H1 (cell line): ENCODE measurements at regions of chr3 and their contacts with region 1.

Region 1: DNA sequence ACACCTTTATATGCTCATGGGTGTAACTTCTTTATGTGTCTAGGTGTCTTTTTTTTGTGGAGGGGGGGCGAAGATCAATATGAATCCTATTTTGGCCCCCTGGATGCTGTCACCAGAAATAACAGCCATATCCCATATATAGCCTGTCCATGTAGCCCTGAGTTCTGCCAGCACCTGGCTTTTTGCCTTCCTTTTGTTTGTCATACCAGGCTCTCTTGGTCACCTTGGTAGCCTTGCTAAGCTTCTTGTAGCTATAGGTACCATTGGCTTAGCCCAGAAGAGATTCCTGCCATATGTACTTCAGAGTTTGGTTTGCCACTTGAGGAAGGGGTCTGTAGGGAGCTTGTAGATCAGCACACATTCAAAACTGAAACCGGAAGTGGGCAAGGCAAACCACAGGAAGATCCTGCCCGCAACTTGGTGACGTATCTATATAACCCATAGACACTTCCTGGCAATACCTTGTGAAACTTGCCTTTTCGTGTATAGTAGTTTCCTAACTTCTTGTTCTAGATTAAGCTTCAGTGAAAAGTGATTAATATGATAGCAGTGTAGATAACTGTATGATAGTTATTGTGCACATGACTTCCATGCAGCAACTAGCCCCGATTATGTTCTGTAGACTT is 11.9 kb downstream of the RASA2 start:
- DNase-seq: no peak
- H3K4me3 ChIP-seq: no peak overlapping the region
- H3K27ac ChIP-seq: no peak overlapping the region
- H3K4me1 ChIP-seq: no peaks in the 10 kb centered on the region
- H3K27me3 ChIP-seq: no peaks in the 10 kb centered on the region
- CTCF ChIP-seq: no peak
- EP300 ChIP-seq: no peak
- POLR2A ChIP-seq: no peak
- RAD21 ChIP-seq: no peak

Region 2: DNA sequence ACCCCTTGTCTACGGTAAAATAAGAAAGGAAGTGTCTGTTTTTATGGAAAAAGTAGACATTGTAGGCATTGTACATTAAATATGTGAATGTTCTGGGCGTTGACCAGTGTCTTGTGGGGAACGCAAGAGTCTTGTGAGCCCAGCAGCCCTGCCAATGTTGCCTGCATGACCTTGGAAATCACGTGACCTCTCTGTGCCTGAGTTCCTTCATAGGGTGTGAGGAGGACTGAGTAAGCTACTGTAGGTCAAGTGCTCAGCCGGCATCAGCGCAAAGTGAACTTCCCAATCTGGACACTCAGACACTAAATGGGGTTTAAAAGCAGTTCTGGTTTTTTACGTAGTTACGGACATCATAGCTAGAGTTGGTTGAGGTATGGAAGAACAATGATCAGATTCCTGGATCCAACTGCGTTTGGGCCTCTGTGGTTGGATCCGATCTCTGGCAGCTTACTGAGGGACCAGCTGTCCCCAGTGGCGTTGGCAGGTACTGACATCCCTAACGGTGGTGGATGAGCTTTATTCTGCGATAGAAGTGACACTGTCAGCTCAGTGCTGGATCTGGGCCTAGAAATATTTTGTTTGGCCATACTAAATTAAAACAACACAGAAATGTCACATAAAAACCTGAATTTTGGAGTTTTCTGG is 383.8 kb before region 1 on chr3:
- CTCF ChIA-PET with region 1: no interaction called
- POLR2A ChIA-PET with region 1: no interaction called
- DNase-seq: peak in 1 of 2 experiments; percentile 65
- H3K4me3 ChIP-seq: no peak overlapping the region
- H3K27ac ChIP-seq: no peak overlapping the region
- H3K4me1 ChIP-seq: no peaks in the 10 kb centered on the region
- H3K27me3 ChIP-seq: no peaks in the 10 kb centered on the region
- CTCF ChIP-seq: peak; percentile 65 to 81 (median 80)
- EP300 ChIP-seq: no peak
- POLR2A ChIP-seq: no peak
- RAD21 ChIP-seq: peak; percentile 55 to 70

Region 3: GRCh38 chr3:141487521-141488252 is 11.0 kb before region 1 on chr3:
- CTCF ChIA-PET with region 1: interaction called, 4 read pairs
- POLR2A ChIA-PET with region 1: interaction called, 14 read pairs
- DNase-seq: peak; percentile 23 to 82
- H3K4me3 ChIP-seq: peak overlapping the region; percentile 63 to 74 (median 73)
- H3K27ac ChIP-seq: peak overlapping the region; percentile 88
- H3K4me1 ChIP-seq: peaks cover 3 to 20% (median 11%) of the 10 kb centered on the region in 4 experiments; a peak in 6 of 7 replicates
- H3K27me3 ChIP-seq: no peaks in the 10 kb centered on the region
- CTCF ChIP-seq: no peak
- EP300 ChIP-seq: no peak
- POLR2A ChIP-seq: peak in 1 of 2 experiments; percentile 28; a peak in 1 of 3 replicates
- RAD21 ChIP-seq: no peak

Region 4: DNA sequence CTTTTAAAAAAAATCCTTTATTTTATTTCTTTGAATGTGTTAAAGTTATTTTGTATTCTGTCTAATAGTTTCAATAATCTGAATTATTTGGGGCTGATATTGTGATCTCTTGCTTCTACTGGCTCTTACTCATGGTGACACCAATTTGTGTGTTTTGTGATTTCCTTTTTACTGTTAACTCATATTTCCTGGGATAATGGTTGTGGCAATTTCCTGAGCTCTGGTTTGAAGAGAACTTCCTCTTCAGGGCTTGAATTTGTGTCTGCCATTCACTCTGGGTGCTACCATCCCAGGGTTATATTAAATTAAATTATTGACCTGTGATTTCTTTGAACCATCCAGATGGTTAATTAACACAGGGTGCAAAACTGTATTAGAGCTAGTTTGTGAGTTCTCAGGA is 179.0 kb after region 1 on chr3:
- CTCF ChIA-PET with region 1: no interaction called
- POLR2A ChIA-PET with region 1: no interaction called
- DNase-seq: no peak
- H3K4me3 ChIP-seq: no peak overlapping the region
- H3K27ac ChIP-seq: no peak overlapping the region
- H3K4me1 ChIP-seq: peaks cover 0 to 6% (median 4%) of the 10 kb centered on the region in 4 experiments; a peak in 2 of 7 replicates
- H3K27me3 ChIP-seq: no peaks in the 10 kb centered on the region
- CTCF ChIP-seq: no peak
- EP300 ChIP-seq: no peak
- POLR2A ChIP-seq: no peak
- RAD21 ChIP-seq: no peak